Posterior vena cava (tissue), 2 donors: ENCODE measurements at regions of chr1 and their contacts with region 1.

Region 1: DNA sequence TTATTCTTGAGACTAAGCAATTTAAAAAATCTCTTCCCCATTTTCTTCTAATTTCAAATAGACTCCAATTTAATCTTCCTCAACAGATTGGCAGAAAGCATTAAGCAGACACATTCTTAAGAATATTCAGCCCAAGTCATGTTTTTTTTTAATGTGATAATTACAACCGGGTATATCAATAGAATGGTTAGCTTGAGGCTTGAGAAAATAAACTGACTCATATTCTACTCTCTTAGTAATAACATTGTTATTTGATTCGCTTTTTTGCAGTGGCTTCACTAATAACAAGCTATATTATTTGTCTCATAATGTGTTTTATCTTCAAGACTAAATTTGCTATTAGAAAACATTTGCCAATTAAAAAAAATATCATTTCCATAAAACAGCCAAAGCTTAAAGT is 488.6 kb upstream of the RGS18 start:
- DNase-seq: no peak

Region 2: GRCh38 chr1:191572479-191572878 is 97.2 kb before region 1 on chr1:
- intact Hi-C with region 1: loop called in 1 of 2 experiments (anchors 5 kb)
- DNase-seq: no peak

Region 3: DNA sequence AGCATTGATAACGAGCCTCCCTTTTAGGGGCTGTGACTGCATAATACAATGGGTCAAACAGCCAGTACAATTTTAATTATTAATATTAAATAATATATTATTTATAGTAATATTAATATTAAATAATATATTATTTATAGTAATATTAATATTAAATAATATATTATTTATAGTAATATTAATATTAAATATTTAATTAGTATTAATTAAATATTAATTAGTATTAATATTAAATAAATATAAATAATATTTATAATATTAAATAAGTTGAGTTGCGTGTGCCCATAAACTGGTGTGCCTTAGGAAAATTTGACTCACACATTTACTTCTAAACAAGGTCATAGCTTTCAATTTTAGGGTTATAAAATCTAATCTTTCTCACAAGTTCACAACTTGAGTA is 20.7 kb before region 1 on chr1:
- intact Hi-C with region 1: no loop called
- DNase-seq: no peak

Region 4: DNA sequence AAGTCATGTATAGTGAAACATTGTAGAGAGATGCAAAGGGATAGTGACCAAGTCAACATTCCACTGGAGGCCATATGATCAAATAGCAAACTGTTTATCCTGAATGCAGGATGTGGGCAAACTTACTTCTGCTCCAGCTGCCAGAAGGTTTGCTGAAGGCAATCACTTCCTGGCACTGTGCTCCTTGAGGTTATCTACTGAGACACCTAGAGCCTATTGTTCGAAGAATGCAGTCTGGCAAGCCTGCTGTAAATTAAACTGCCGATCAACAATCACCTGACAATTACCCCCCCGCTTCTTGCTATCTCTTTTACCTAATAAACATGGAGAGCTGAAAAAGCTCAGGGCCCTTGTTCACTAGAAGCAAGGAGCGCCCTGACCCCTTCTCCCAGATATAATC is 1656.1 kb after region 1 on chr1:
- intact Hi-C with region 1: no loop called
- DNase-seq: no peak